Right ventricle myocardium superior (tissue), 1 donor: ENCODE measurements at regions of chr22 and their contacts with region 1.

Region 1: DNA sequence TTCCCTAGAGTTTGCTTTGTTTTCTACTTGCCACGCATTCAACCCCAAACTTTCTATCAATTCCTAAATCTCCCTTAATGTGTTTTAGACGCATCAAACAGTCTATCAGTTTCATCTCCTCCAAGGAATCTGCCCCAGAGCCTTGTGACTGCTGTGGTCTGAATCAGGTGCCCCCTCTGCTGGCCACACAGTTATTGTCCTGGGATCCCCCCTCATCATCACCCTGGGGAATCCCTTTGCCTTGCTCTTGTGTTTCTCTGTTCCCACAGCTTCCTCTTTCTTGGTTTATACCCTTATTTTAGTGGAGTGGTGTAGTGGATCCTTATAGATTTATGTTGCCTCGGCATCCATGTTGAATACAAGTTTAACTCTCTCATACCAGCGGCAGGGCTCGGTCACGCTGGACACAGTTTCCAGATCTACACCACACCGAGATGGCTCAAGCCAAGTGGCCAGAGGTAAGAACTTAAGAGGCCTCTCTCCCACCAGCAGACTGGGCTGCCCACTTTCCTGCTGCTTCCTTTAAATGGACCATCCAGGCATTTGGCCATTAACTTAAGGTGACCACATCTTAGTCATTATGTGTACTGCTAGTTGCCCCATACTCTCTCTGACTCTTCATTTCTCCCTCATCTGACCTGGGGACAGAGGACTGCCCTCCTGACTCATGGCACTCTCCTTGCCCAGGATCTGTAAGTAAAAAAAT is 8.2 kb downstream of the UPB1 start:
- DNase-seq: peak; percentile 71
- ATAC-seq: peak; percentile 66

Region 2: GRCh38 chr22:24423519-24424000 is 79.7 kb before region 1 on chr22:
- intact Hi-C with region 1: loop called (anchors 5 kb)
- DNase-seq: peak; percentile 82
- ATAC-seq: peak; percentile 85